AG04450 (cell line): ENCODE measurements at regions of chr12 and their contacts with region 1.

Region 1: DNA sequence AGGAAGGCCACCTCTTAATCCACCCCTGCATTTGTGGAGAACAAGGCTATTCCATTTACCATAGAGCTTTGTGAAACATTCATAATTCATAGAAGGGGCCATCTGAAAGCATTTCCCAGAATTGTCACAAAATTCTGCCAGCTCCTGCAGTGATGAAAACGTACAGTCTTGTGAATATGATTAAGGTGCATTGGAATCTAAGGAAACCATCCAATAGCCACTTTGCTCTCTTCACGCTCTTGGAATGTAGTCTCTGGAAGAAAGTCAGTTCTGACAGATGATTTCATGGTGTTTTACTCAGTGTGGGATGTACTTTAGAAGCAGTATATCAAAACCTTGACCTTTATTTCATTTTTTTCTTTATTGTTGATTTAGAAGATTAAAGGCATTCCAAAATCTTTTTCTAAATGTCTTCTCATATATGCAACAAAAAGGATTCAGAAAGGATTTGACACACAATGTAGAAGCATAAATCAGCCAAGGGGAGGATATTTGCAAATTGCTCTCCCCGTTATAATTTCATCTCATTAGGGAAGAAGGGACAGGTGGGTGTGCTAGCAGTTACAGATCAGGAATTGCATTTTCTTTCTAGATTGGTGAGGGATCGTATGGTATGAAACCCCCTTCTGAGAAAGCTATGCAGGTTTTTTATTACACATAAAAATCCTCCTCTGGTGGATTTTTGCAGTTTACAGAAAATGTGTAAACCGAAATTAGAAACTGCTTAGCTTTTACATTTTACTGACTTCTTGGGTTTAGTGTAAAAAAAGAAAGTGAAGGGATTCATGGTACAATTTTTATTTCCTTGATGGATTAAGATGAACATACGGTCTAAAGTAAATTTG is 390.2 kb downstream of the LRIG3 start:
- DNase-seq: peak; percentile 88
- H3K4me3 ChIP-seq: no peak overlapping the region
- H3K27ac ChIP-seq: peak overlapping the region; percentile 77
- H3K27me3 ChIP-seq: no peaks in the 10 kb centered on the region
- CTCF ChIP-seq: no peak

Region 2: DNA sequence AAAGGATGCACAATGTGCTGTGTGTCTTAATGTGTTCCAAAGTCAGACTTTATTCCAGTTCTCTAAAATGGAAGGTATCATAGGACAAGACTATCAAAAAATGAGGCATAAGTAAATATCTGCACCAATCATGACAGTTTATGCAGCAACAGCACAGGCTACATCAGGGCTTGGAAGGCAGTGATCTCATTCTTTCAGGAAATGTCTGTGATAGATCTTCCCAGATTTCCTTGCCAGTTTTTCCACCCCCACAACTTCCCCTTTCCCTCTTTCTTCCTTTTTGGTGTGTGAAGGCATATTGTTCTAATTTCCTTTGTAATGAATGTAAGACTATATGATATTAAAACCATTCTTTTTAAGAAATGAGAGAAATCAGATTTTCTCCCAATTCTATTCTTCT is 262.1 kb before region 1 on chr12:
- CTCF ChIA-PET with region 1: no interaction called
- POLR2A ChIA-PET with region 1: no interaction called
- DNase-seq: no peak
- H3K4me3 ChIP-seq: no peak overlapping the region
- H3K27ac ChIP-seq: no peak overlapping the region
- H3K27me3 ChIP-seq: no peaks in the 10 kb centered on the region
- CTCF ChIP-seq: no peak

Region 3: DNA sequence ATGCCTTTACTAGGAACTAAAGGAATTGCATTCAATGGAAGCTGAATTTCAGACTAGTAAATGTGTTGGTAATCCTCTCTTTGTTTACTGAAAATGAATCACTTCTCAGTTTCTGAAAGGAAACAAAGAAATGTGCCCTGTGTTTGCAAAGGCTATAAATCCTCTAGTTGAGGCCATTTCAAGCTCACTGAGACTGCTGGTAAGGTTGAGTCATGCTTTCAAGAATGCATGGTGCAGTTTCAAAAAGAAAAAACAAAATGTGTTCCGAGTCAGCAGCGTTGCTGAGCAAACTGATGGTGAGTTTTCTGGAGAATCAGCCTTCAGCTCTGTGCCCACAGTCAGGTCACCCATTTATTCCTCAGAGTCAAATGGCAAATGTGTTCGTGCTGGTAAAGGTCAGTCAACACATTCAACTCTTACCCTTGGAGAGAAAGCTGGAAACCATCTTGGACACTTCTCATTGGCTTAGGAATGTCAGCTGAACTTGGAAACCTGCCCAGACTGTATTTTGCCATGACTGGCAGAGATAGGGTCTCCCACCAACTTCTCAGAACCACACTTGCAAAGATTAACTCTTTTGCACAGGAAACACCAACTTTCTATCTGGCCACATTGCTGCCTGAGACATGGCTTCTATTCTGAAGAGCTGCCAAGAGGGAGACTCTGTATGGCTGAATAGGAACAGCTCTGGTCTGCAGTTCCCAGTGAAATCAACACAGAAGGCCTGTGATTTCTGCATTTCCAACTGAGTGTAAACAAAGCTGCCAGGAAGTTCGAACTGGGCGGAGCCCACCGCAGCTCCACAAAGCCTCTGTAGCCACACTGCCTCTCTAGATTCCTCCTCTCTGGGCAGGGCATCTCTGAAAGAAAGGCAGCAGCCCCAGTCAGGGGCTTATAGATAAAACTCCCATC is 104.4 kb before region 1 on chr12:
- CTCF ChIA-PET with region 1: no interaction called
- POLR2A ChIA-PET with region 1: interaction called, 16 read pairs
- DNase-seq: peak; percentile 82
- H3K4me3 ChIP-seq: peak overlapping the region; percentile 27
- H3K27ac ChIP-seq: peak overlapping the region; percentile 93
- H3K27me3 ChIP-seq: no peaks in the 10 kb centered on the region
- CTCF ChIP-seq: no peak

Region 4: GRCh38 chr12:58441483-58441882 is 88.6 kb before region 1 on chr12:
- CTCF ChIA-PET with region 1: no interaction called
- POLR2A ChIA-PET with region 1: no interaction called
- DNase-seq: no peak
- H3K4me3 ChIP-seq: no peak overlapping the region
- H3K27ac ChIP-seq: no peak overlapping the region
- H3K27me3 ChIP-seq: no peaks in the 10 kb centered on the region
- CTCF ChIP-seq: no peak

Region 5: GRCh38 chr12:58519845-58520244 is 10.3 kb before region 1 on chr12:
- CTCF ChIA-PET with region 1: no interaction called
- POLR2A ChIA-PET with region 1: no interaction called
- DNase-seq: no peak
- H3K4me3 ChIP-seq: no peak overlapping the region
- H3K27ac ChIP-seq: no peak overlapping the region
- H3K27me3 ChIP-seq: no peaks in the 10 kb centered on the region
- CTCF ChIP-seq: no peak